ENCODE measurements at regions of chr16 and their contacts with region 1.

Region 1: GRCh38 chr16:48879223-48880122 is 269.5 kb upstream of the N4BP1 start:
- DNase-seq: no peak
- ATAC-seq: no peak

Region 2: DNA sequence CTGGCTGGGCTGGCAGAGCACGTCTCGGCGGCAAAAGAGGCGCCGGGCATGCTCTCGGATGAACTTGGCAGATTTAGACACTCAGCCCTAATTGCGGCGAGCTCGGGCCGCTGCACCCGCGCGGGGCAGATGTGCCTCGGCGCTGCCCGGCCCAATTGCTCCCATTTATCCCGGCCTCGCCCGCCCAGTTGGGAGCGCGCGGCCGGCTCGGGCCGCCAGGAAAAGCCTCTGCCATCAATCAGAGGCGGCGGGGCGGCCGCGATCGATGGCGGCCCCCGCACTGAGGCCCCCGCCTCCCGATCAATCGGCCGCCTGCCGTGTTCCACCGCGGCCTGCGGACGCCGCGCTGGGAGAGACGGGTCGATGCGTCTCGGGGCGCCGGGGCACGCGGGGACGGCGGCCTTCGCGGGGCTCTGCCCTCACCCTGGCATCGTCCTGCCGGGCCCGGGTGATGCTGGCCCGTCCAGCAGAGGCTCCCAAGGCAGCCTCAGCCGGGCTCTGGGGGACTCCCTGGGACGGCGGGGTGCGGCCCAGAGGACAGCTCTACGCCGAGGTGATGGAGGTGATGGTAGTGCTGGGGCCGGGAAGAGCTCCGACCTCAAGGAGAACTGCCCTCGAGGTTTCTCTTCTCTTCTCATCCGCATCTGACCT is 68.5 kb before region 1 on chr16:
- intact Hi-C with region 1: loop called in 1 of 2 experiments (anchors 10 kb)
- DNase-seq: no peak
- ATAC-seq: peak in 1 of 2 donors; percentile 20

Region 3: GRCh38 chr16:48950184-48950583 is 70.7 kb after region 1 on chr16:
- intact Hi-C with region 1: no loop called
- DNase-seq: no peak
- ATAC-seq: no peak

Region 4: DNA sequence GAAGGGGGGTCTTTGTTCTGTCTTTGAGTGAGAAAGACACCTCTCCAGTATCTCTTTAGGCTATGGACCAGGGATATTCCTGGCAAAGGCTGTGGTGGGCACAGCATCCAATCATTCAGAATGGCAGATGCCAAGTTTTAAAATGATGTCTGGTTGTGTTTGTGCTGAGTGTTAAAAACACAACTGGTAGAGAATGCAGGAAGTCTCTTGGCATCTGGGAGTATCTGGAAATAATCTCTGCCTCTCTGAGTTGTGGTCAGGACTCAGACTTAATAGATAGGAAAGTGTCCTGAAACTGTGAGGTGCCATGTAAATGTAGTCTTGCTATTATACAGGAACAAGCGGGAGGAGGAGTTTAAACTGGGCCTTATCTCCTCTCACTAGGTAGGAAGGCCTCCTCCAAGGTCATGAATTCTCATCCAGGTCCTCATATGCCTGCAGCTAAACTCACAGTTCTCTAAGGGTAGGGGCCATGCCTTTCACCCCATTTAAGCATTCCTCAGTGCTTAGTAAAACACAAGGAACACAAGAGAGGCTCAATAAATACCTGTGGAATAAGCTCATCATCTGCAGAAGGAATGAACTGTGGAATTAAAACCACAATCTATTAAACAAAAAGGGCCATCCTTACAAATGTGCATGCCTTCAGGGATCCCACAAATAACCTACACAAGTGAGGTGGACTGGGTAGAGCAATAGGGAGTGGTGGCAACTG is 84.6 kb after region 1 on chr16:
- intact Hi-C with region 1: no loop called
- DNase-seq: no peak
- ATAC-seq: peak in 1 of 2 donors; percentile 53